Posterior vena cava (tissue), 2 donors: ENCODE measurements at regions of chr7 and their contacts with region 1.

Region 1: GRCh38 chr7:44921607-44922359 is 36.5 kb upstream of the PURB start:
- DNase-seq: peak; percentile 98

Region 2: DNA sequence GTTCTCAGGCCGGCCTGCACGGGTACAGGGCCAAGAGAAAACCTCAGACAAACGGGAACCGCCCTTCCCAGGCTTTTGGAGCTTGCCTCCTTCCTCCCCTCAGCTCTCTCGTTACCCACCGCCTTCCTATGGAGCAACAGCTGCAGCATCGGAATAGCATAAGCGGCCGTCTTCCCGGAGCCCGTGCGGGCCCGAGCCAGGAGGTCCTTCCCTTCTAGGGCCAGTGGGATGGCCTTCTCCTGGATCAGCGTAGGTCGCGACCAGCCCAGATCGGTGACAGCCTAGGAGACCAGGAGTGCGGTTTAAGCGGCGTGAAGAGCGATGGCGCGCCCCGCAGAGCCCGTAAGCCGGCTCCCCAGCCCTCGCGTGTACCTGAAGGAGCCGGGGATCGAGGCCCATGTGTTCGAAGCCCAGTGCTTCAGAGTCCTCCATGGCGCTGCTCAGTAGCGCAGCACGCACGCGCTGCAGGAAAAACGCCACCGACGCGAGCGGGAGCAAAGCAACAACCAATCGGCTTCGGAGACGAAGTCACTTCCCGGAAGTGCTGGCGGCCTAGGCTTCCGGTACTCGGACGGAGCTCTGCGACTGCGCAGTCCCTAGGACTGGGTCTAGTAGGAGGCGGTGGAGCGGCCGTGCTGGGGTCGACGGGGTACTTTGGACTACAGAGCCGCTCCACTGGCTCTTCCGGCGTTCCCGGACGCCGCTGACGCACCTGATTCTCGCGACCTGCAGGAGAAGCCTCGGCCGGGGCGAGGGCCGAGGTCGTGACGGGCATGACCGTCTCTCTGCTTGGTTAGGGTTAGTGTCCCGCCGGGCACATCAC is 348.1 kb before region 1 on chr7 and contains the start of gene DDX56:
- intact Hi-C with region 1: no loop called
- DNase-seq: peak; percentile 99
- total RNA-seq, gene DDX56: 33.9 to 40.2 TPM

Region 3: DNA sequence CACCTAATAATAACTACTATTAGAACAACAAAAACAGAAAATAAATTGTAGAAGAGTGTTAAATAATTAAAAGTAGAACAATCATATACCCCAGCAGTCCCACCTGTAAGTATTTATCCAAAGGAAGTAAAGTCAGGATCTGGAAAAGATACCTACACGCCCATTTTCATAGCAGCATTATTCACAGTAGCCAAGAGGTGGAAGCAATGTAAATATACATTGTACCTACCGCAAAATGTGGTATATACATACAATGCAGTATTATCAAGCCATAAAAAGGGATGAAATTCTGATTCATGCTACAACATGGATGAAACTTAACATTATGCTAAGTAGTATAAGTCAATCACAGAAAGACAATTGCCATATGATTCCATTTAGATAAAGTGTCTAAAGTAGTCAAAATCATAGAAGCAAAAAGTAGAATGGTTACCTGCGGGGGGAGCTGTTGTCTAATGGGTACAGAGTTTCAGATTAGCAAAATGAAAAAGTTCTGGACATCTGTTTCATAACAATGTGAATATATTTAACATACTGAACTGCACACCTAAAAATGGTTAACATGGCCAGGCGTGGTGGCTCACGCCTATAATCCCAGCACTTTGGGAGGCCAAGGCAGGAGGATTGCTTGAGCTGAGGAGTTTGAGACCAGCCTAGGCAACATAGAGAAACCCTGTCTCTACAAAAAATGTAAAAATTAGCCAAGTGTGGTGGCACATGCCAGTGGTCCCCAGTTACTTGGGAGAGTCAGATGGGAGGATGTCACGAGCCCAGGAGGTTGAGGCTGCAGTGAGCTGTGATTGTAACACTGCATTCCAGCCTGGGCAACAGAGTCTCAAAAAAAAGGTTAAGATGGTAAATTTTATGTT is 333.7 kb before region 1 on chr7:
- intact Hi-C with region 1: loop called in 1 of 2 experiments (anchors 5 kb)
- DNase-seq: peak; percentile 32

Region 4: DNA sequence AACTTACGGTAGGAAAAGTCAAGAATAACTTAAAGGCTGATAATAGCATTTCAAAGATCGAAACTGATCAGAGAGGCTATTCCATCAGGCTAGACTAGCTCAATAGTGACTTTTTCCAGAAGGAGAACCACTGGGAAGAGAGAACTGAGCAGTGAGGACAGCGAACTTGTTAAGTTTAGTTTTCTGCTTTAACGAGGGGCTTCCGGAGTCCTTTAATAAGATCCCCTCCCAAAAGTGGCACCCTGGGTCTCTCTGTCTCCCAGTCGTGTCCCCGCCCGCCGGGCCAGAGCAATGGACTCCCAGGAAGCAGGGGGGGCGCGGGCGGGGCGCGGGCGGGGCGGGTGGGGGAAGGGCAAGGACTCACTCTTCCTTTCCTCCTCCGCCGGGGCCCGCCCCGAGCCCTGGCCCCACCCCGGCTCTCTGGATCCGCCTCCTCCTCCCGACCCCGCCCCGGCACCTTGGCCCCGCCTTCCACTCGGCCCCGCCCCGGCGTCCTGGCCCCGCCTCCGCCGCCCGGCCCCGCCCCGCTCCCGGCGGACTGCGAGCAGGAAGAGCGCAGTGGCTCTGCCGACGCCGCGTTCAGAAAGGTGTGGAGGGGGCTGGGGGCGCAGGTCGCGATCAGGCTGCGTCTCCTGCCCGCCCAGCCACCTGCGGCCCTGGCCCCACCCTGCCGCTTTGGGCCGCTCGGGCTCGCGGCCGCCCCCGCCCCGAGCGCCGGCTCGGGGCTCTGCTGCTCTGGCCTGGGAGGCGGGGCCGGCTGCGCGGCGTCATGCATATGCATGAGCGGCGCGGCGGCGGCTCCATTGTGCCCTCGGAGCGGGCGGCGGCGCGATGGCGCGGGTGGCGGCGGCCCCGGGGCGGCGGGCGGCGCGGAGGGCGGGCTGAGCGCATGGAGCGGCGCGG is 173.5 kb before region 1 on chr7 and contains the start of gene ZMIZ2:
- intact Hi-C with region 1: no loop called
- DNase-seq: peak; percentile 98
- total RNA-seq, gene ZMIZ2: 52.2 to 67.1 TPM

Region 5: GRCh38 chr7:44858161-44858560 is 63.6 kb before region 1 on chr7:
- intact Hi-C with region 1: loop called (anchors 5 kb)
- DNase-seq: no peak

Region 6: GRCh38 chr7:44909596-44910389 is 12.0 kb before region 1 on chr7:
- intact Hi-C with region 1: no loop called
- DNase-seq: no peak